PC-9 (cell line): ENCODE measurements at regions of chr1 and their contacts with region 1.

Region 1: GRCh38 chr1:192573499-192573898 is 2.1 kb upstream of the RGS1 start:
- DNase-seq: no peak
- H3K4me3 ChIP-seq: no peak overlapping the region
- H3K27ac ChIP-seq: no peak overlapping the region
- H3K4me1 ChIP-seq: no peaks in the 10 kb centered on the region
- H3K27me3 ChIP-seq: no peaks in the 10 kb centered on the region
- CTCF ChIP-seq: no peak

Region 2: GRCh38 chr1:192521734-192522133 is 51.8 kb before region 1 on chr1:
- CTCF ChIA-PET with region 1: no interaction called
- POLR2A ChIA-PET with region 1: no interaction called
- intact Hi-C with region 1: loop called (anchors 5 kb)
- DNase-seq: no peak
- H3K4me3 ChIP-seq: no peak overlapping the region
- H3K27ac ChIP-seq: no peak overlapping the region
- H3K4me1 ChIP-seq: no peaks in the 10 kb centered on the region
- H3K27me3 ChIP-seq: no peaks in the 10 kb centered on the region
- CTCF ChIP-seq: no peak

Region 3: DNA sequence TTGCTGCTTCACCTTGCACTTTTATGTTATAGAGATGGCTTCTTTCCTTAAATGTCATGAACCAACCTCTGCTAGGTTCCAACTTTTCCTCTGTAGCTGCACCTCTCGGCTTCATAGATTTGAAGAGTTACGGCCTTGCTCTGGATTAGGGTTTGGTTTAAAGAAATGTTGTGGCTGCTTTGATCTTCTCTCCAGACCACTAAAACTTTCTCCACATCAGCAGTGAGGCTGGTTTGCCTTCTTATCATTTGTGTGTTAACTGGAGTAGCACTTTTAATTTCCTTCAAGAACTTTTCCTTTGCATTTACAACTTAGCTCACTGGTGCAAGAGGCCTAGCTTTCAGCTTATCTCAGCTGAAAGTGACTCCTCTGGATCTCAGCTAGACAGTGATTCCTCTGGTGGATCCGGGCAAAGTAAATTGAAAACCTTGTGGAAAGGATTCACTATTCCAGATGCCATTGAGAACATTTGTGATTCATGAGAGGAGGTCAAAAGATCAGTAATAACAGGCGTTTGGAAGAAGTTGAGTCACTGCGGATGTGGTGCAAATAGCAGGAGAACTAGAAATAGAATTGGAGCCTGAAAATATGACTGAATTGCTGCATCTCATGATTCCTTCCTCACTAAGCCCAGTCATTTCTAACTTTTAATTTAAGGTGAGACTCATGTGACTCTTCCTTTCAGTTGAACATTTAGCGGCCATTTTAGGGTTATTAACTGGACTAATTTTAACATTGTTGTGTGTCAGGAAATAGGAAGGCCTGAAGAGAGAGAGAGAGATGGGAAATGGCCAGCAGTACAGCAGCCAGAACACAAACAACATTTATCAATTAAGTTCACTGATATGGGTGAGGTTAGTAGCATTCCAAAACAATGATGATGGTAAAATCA is 14.1 kb before region 1 on chr1:
- CTCF ChIA-PET with region 1: no interaction called
- POLR2A ChIA-PET with region 1: no interaction called
- intact Hi-C with region 1: no loop called
- DNase-seq: peak in 1 of 2 experiments; percentile 67
- H3K4me3 ChIP-seq: no peak overlapping the region
- H3K27ac ChIP-seq: peak overlapping the region; percentile 59
- H3K4me1 ChIP-seq: peaks cover 18% of the 10 kb centered on the region
- H3K27me3 ChIP-seq: no peaks in the 10 kb centered on the region
- CTCF ChIP-seq: no peak